HepG2 (cell line): ENCODE measurements at regions of chr3 and their contacts with region 1.

Region 1: GRCh38 chr3:195063581-195064193 is 207.3 kb downstream of the XXYLT1 start:
- DNase-seq: no peak
- ATAC-seq: no peak
- H3K4me3 ChIP-seq: no peak overlapping the region
- H3K27ac ChIP-seq: no peak overlapping the region
- H3K4me1 ChIP-seq: peaks cover 49% of the 10 kb centered on the region
- H3K27me3 ChIP-seq: peaks cover 3 to 7% of the 10 kb centered on the region in 2 experiments; a peak in 1 of 5 replicates
- CTCF ChIP-seq: no peak
- EP300 ChIP-seq: no peak
- POLR2A ChIP-seq: no peak
- RAD21 ChIP-seq: no peak

Region 2: DNA sequence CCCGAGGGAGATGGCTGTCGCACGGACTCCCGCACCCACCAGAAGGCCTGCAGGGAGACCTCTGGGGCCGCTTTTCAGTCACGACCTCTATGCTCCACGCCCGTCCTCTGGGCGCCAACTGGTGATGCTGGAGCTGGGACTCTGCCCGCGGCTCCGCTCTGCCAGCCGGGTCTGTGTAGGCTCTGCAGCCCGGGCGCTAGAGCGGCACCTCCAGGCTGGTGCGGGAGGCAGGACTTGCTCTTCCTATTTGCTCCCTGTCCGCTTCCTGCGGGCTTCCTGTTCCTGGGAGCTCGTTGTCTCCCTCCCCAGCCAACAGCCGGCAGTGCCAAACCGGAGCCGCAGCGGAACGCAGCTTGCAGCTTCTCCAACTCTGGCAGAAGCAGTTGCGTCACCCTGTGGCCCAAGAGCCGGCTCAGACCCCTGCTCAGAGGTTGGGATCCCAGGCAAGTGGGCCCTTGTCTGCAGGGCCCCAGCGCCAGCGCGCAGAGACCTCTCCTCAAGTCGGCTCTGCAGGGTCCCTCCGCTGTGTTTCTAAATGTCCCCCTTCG is 78.6 kb before region 1 on chr3:
- CTCF ChIA-PET with region 1: no interaction called
- POLR2A ChIA-PET with region 1: no interaction called
- in situ Hi-C with region 1: no loop called
- intact Hi-C with region 1: no loop called
- DNase-seq: peak; percentile 46
- ATAC-seq: peak; percentile 90
- H3K4me3 ChIP-seq: no peak overlapping the region; a peak in 1 of 6 replicates
- H3K27ac ChIP-seq: no peak overlapping the region
- H3K4me1 ChIP-seq: peaks cover 22% of the 10 kb centered on the region
- H3K27me3 ChIP-seq: peaks cover 4 to 17% of the 10 kb centered on the region in 2 experiments; a peak in 4 of 5 replicates
- CTCF ChIP-seq: peak; percentile 56
- EP300 ChIP-seq: no peak
- POLR2A ChIP-seq: no peak
- RAD21 ChIP-seq: peak; percentile 76

Region 3: DNA sequence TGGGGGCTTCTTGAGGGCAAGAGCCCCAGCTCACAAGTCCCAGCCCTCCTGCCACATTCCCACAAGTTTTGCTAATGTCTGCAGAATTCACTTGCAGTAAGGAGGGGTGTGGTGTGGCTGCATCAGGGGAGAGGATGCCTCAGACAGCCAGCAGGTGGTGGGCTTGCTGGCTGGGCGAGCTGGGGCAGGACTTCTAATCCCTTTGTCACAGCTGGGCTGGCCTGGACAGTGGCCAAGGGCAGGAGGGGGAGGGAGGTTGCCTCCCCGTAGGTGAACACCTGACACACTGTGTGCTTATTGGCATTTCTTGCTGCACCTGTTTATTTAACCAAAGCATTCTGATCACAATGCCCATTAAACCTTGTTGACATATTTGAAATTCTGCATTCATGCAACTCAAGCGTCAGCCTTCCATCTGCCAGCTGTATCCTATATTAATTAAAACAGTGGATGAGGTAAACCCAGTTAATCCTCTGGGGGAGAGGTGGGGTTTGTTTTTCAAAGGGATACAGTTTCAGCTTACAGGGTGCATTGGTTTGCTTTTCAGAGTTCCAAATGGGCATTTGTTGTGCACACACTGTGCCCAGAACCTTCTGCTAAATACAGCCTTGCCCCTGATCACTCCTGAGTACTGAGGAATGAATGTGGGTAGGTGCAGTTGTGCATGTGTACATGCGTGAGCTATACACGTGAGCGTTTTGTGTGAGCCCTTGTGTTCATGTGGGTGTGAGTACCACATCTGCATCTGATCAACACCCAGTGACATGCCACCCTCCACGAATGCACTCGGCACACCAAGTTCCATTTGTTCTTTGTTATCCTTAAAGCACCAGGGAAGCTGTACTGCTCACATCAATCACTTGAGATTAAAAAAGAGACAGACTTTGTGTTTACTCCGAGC is 61.5 kb before region 1 on chr3:
- CTCF ChIA-PET with region 1: no interaction called
- POLR2A ChIA-PET with region 1: no interaction called
- in situ Hi-C with region 1: no loop called
- intact Hi-C with region 1: loop called (anchors 10 kb)
- DNase-seq: peak; percentile 65
- ATAC-seq: peak; percentile 96
- H3K4me3 ChIP-seq: no peak overlapping the region
- H3K27ac ChIP-seq: no peak overlapping the region
- H3K4me1 ChIP-seq: peaks cover 20% of the 10 kb centered on the region
- H3K27me3 ChIP-seq: peaks cover 0 to 53% of the 10 kb centered on the region in 2 experiments; a peak in 3 of 5 replicates
- CTCF ChIP-seq: peak; percentile 92
- EP300 ChIP-seq: no peak
- POLR2A ChIP-seq: no peak
- RAD21 ChIP-seq: peak; percentile 86

Region 4: DNA sequence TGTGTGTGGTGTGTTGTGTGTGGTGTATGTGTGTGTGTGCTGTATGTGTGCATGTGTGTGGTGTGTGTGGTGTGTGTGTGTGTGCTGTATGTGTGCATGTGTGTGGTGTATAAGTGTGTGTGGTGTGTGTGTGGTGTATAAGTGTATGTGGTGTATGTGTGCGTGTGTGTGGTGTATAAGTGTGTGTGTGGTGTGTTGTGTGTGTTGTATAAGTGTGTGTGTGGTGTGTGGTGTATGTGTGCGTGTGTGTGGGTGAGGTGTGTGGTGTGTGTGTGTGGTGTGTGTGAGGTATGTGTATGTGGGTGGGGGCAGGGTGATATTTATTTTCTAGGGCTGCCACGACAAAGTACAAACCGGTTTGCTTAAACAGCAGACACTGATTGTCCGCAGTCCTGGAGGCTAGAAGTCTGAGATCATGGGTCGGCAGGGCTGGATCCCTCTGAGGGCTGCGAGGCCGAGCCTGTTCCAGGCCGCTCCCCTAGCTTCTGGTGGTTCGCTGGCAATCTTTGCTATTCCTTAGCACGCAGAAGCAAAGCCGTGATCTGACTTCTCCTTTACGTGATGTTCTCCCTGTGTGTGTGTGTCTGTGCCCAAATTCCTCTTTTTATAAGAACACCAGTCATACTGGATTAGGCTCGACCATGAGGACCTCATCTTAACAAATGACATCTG is 47.1 kb after region 1 on chr3:
- CTCF ChIA-PET with region 1: no interaction called
- POLR2A ChIA-PET with region 1: no interaction called
- in situ Hi-C with region 1: no loop called
- intact Hi-C with region 1: no loop called
- DNase-seq: peak; percentile 32
- ATAC-seq: no peak
- H3K4me3 ChIP-seq: no peak overlapping the region
- H3K27ac ChIP-seq: no peak overlapping the region
- H3K4me1 ChIP-seq: peaks cover 33% of the 10 kb centered on the region
- H3K27me3 ChIP-seq: no peaks in the 10 kb centered on the region
- CTCF ChIP-seq: no peak
- EP300 ChIP-seq: no peak
- POLR2A ChIP-seq: no peak
- RAD21 ChIP-seq: no peak

Region 5: DNA sequence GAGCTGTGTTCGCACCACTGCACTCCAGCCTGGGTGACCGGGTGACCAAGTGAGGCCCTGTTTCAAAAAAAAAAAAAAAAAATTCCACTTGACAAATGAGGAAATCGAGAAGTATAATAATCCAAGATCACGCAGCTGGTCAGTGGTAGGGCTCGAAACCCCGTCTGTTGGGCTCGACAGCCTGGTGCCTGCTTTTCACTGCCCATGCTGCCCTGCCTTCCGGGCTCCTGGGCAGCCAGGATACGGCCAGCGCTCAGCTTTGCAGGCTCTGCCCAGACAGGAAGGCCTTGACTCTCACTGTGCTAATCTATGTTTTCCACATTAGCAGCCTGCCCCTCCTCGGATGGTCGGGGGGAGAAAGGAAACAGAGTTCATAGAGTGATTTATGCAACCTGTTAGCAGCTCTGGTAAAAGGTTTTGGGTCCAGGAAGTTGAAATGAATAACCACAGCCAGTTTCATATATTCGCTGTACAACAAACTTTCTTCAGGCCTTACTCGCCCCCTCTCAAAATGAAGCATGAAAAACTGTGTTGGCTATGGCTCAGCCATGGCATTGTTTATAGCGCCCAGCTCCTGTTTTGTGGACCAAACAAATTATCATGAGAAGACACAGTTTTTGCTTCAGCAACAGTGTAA is 98.5 kb after region 1 on chr3:
- CTCF ChIA-PET with region 1: no interaction called
- POLR2A ChIA-PET with region 1: no interaction called
- in situ Hi-C with region 1: no loop called
- intact Hi-C with region 1: no loop called
- DNase-seq: peak; percentile 92
- ATAC-seq: peak; percentile 65
- H3K4me3 ChIP-seq: no peak overlapping the region
- H3K27ac ChIP-seq: peak overlapping the region; percentile 100
- H3K4me1 ChIP-seq: peaks cover 100% of the 10 kb centered on the region
- H3K27me3 ChIP-seq: no peaks in the 10 kb centered on the region
- CTCF ChIP-seq: no peak; the same call in 1 of the 2 replicates
- EP300 ChIP-seq: peak in 1 of 2 experiments; percentile 91; a peak in 2 of 4 replicates
- POLR2A ChIP-seq: peak; percentile 49 to 53; a peak in 3 of 4 replicates
- RAD21 ChIP-seq: no peak